ENCODE measurements at regions of chr17 and their contacts with region 1.

Region 1: GRCh38 chr17:76452660-76453430 is at the start of gene UBE2O:
- DNase-seq: peak; percentile 87 to 91
- ATAC-seq: peak; percentile 91 to 97 (median 92)
- H3K4me3 ChIP-seq: peak within 1 kb of the TSS; percentile 70 to 99 (median 93)
- H3K27ac ChIP-seq: peak within 1 kb of the TSS; percentile 60 to 95 (median 88)
- H3K4me1 ChIP-seq: peaks cover 4 to 45% (median 30%) of the 10 kb centered on the region in 9 donors
- H3K27me3 ChIP-seq: no peaks in the 10 kb centered on the region
- CTCF ChIP-seq: peak in 8 of 9 donors; percentile 6 to 64 (median 50)
- total RNA-seq, gene UBE2O: 31.0 to 39.0 (median 36.9) TPM

Region 2: DNA sequence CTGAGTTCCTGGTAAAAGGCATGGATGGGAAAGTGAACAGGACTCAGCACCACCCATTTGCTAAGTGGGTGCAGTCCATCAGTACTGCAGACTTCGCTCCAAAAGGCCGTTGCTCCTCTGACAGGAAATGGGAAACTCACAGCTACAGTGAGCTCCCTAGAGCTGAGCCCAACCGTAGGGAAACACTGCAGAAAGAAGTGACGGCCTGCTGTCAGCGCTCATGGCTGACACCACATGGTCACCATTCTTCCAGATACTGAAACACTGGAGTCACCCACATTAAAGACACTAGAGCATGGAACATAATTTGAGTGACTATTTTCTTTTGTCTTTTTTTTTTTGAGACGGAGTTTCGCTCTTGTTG is 31.8 kb before region 1 on chr17:
- intact Hi-C with region 1: loop called in 1 of 10 experiments (anchors 2 kb)
- DNase-seq: peak in 1 of 2 donors; percentile 58
- ATAC-seq: peak; percentile 82 to 92 (median 86)
- H3K4me3 ChIP-seq: no peak overlapping the region
- H3K27ac ChIP-seq: peak overlapping the region in 8 of 10 donors; percentile 23 to 70 (median 62)
- H3K4me1 ChIP-seq: peaks cover 14 to 61% (median 47%) of the 10 kb centered on the region in 9 donors
- H3K27me3 ChIP-seq: no peaks in the 10 kb centered on the region
- CTCF ChIP-seq: peak in 1 of 9 donors; percentile 8

Measured in heart right ventricle (tissue), 16 donors.